Vagina (tissue), 2 donors: ENCODE measurements at regions of chr14 and their contacts with region 1.

Region 1: DNA sequence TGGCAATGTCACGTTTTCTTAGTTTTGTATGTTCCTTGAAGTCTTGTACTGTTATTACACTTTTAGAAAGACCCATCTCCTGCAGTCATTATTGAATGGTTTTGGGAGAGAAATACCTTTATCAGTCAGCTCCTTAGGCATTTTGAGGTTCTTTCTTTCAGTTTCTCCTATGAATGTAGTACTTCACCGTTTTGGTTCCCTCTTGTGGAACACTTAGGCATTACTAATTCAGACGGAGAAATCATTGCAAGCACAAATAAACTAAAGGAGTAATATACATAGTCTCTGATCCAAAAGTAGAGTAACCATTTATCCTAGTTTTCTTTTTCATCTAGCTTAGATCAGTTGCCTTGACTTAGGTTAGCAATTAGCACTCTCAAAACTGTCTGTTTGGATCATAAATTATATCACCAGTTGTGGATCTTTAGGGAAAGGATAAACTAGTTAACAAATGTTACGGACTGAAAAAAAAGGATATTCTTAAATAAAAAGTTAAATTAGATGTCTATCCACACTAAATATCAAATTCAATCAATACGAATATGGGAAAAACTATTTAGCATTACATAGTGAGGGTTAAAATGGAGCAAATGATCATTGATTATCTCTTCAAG is 1538.3 kb upstream of the SEL1L start:
- DNase-seq: no peak
- H3K4me3 ChIP-seq: no peak overlapping the region
- H3K27ac ChIP-seq: no peak overlapping the region
- H3K4me1 ChIP-seq: no peaks in the 10 kb centered on the region
- H3K27me3 ChIP-seq: no peaks in the 10 kb centered on the region
- CTCF ChIP-seq: no peak
- POLR2A ChIP-seq: no peak

Region 2: GRCh38 chr14:83120187-83120586 is 48.2 kb after region 1 on chr14:
- intact Hi-C with region 1: no loop called
- DNase-seq: no peak
- H3K4me3 ChIP-seq: no peak overlapping the region
- H3K27ac ChIP-seq: no peak overlapping the region
- H3K4me1 ChIP-seq: no peaks in the 10 kb centered on the region
- H3K27me3 ChIP-seq: no peaks in the 10 kb centered on the region
- CTCF ChIP-seq: no peak
- POLR2A ChIP-seq: no peak

Region 3: GRCh38 chr14:84825481-84825880 is 1753.5 kb after region 1 on chr14:
- intact Hi-C with region 1: loop called (anchors 5 kb)
- DNase-seq: no peak
- H3K4me3 ChIP-seq: no peak overlapping the region
- H3K27ac ChIP-seq: no peak overlapping the region
- H3K4me1 ChIP-seq: no peaks in the 10 kb centered on the region
- H3K27me3 ChIP-seq: no peaks in the 10 kb centered on the region
- CTCF ChIP-seq: no peak
- POLR2A ChIP-seq: no peak